Aorta (tissue), 5 donors: ENCODE measurements at regions of chr13 and their contacts with region 1.

Region 1: GRCh38 chr13:113452942-113453901 is at the start of gene ADPRHL1:
- DNase-seq: peak in 1 of 2 donors; percentile 10
- ATAC-seq: no peak
- H3K4me3 ChIP-seq: no peak within 1 kb of the TSS
- H3K27ac ChIP-seq: no peak within 1 kb of the TSS
- H3K4me1 ChIP-seq: no peaks in the 10 kb centered on the region
- H3K27me3 ChIP-seq: no peaks in the 10 kb centered on the region
- total RNA-seq, gene ADPRHL1: 2.4 to 10.8 TPM

Region 2: DNA sequence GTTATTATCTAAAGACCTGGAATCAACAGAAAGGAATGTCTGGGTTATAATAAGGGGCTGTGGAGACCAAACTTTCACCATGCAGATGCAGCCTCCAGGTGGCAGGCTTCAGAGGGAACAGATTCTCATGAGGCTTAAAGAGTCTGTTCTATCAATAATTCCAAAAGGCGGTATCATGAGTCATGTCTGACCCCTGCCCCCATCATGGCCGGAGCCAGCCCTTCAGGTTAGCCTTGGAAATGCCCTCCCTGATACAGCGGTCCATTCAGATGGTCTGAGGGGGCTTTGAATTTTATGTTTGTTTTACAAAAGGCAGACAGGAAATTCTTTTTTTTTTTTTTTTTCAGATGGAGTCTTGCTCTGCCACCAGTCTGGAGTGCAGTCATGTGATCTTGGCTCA is 177.8 kb before region 1 on chr13:
- intact Hi-C with region 1: loop called in 1 of 2 experiments (anchors 5 kb)
- DNase-seq: no peak
- ATAC-seq: peak; percentile 36
- H3K4me3 ChIP-seq: no peak overlapping the region
- H3K27ac ChIP-seq: no peak overlapping the region
- H3K4me1 ChIP-seq: no peaks in the 10 kb centered on the region
- H3K27me3 ChIP-seq: no peaks in the 10 kb centered on the region

Region 3: DNA sequence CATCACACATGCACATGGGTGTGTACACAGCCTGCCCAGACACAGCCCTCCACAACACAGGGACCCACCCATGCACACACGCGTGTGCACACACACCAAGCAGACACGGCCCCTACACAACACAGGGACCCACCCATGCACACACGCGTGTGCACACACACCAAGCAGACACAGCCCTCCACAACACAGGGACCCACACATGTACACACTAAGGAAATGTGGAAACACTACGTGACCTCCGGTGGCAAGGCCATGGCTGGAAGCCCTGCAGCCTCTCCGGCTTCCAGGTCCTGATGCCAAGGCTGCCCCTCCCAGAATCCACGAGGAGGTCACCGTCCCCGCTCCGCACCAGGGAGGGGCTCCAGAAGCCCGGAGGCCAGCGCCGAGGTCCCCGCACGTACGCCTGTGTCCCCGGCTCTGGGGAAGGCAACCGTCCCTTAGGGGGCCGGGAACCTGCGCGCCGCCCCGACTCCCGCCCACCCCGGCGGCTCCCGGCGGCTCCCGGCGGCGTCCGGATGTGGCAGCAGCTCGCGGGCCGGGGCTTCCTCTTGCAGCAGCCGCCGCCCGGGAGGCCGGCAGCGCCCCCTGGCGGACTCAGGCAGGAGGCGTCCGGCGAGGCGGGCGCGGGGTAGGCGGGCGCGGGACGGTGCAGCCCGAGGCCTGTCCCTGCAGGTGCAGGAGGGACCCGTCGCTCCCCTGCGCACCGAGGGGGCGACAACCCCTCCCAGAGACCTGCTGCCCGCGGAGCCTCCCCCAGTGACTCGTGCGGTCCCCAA is 59.5 kb before region 1 on chr13:
- intact Hi-C with region 1: loop called (anchors 5 kb)
- DNase-seq: peak; percentile 87 to 93
- ATAC-seq: peak; percentile 95
- H3K4me3 ChIP-seq: peak overlapping the region; percentile 38 to 41
- H3K27ac ChIP-seq: no peak overlapping the region
- H3K4me1 ChIP-seq: no peaks in the 10 kb centered on the region
- H3K27me3 ChIP-seq: no peaks in the 10 kb centered on the region

Region 4: DNA sequence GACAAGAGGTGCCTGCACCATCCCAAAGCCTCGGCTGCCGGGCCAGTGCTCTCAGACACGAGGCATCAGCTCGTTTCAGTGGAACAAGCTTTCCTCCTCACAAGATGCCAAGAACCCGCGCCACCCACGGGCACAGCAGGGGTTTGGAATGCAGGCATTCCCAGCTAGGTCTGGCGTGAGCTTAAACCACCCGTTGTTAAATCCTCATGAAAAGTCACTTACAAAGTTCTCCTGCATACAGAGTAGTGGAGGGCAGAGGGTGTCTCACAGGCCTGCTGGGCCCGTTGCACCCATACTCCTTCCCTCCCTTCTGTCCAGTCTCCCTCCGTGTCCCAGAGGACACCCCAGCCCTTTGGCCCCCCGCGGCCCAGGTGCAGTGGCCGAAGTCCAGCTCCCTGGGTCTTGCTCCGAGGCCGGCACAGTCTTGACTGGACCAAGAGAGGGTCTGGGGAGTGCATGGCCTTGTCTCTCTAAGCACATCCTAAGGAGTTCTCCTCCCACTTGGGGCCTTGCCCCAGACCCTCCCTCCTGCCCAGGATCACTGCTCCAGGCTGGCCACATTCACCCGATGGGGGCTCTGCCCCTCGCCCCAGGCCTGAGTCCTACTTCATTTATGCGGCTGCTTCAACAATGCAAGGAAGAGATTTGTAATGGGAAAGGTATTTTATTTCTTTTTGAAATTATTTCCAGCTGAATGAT is 54.1 kb before region 1 on chr13:
- intact Hi-C with region 1: loop called (anchors 5 kb)
- DNase-seq: peak in 1 of 2 donors; percentile 84
- ATAC-seq: no peak
- H3K4me3 ChIP-seq: no peak overlapping the region
- H3K27ac ChIP-seq: peak overlapping the region in 1 of 2 donors; percentile 6
- H3K4me1 ChIP-seq: no peaks in the 10 kb centered on the region
- H3K27me3 ChIP-seq: no peaks in the 10 kb centered on the region